Naive thymus-derived CD8-positive, alpha-beta T cell (primary cell): ENCODE measurements at regions of chr12 and their contacts with region 1.

Region 1: GRCh38 chr12:49358483-49359141 is 8.7 kb upstream of the SPATS2 start:
- DNase-seq: peak in 8 of 10 donors; percentile 54 to 82 (median 68)
- ATAC-seq: peak; percentile 98 to 99
- H3K4me3 Mint-ChIP-seq: no peak overlapping the region
- H3K27ac Mint-ChIP-seq: no peak overlapping the region
- H3K4me1 Mint-ChIP-seq: peaks cover 2 to 12% (median 6%) of the 10 kb centered on the region in 4 donors
- H3K27me3 Mint-ChIP-seq: peaks cover 0 to 32% (median 15%) of the 10 kb centered on the region in 5 donors

Region 2: GRCh38 chr12:49088190-49088931 is 270.3 kb before region 1 on chr12:
- POLR2A ChIA-PET with region 1: no interaction called
- DNase-seq: peak; percentile 52 to 83 (median 68)
- ATAC-seq: peak; percentile 86 to 87
- H3K4me3 Mint-ChIP-seq: peak overlapping the region in 8 of 10 donors; percentile 8 to 71 (median 50)
- H3K27ac Mint-ChIP-seq: peak overlapping the region in 3 of 10 donors; percentile 39 to 47 (median 41)
- H3K4me1 Mint-ChIP-seq: peaks cover 10 to 46% (median 42%) of the 10 kb centered on the region in 4 donors
- H3K27me3 Mint-ChIP-seq: peaks cover 16 to 52% (median 38%) of the 10 kb centered on the region in 5 donors

Region 3: DNA sequence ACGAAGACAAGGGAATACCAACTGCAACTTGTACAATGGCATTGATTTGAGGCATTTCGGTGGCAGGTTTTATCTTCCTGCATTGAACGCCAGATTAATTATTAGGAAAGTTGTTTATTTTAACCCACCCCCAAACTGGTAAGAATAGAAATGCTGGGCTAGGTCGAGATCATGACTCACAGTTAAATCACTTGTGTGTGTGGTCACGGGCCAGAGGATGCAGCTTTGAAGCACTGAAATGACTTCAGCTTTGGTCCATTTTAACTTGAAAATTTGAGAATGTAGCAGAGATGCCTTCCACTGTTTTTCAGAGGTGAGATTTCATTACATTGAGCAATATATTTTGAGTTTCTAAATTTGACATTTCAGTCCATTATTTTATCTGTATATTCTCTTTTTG is 156.7 kb after region 1 on chr12:
- POLR2A ChIA-PET with region 1: interaction called, 10 read pairs
- DNase-seq: no peak
- ATAC-seq: no peak
- H3K4me3 Mint-ChIP-seq: no peak overlapping the region
- H3K27ac Mint-ChIP-seq: no peak overlapping the region
- H3K4me1 Mint-ChIP-seq: peaks cover 0 to 3% (median 0%) of the 10 kb centered on the region in 4 donors
- H3K27me3 Mint-ChIP-seq: no peaks in the 10 kb centered on the region

Region 4: GRCh38 chr12:49821373-49822287 is 463.0 kb after region 1 on chr12:
- POLR2A ChIA-PET with region 1: interaction called, 11 read pairs
- DNase-seq: no peak
- ATAC-seq: peak; percentile 18 to 28
- H3K4me3 Mint-ChIP-seq: peak overlapping the region in 7 of 10 donors; percentile 12 to 73 (median 62)
- H3K27ac Mint-ChIP-seq: peak overlapping the region; percentile 63 to 91 (median 82)
- H3K4me1 Mint-ChIP-seq: peaks cover 26 to 65% (median 52%) of the 10 kb centered on the region in 4 donors
- H3K27me3 Mint-ChIP-seq: no peaks in the 10 kb centered on the region